WTC11 (cell line): ENCODE measurements at regions of chr11 and their contacts with region 1.

Region 1: GRCh38 chr11:126416542-126417090 is 61.1 kb downstream of the ST3GAL4 start:
- DNase-seq: peak; percentile 83
- ATAC-seq: peak; percentile 97
- H3K4me3 Mint-ChIP-seq: peak overlapping the region; percentile 50
- H3K27ac Mint-ChIP-seq: no peak overlapping the region
- H3K4me1 Mint-ChIP-seq: peaks cover 14% of the 10 kb centered on the region
- H3K27me3 Mint-ChIP-seq: peaks cover 8% of the 10 kb centered on the region
- CTCF ChIP-seq: no peak

Region 2: GRCh38 chr11:126403658-126404057 is 13.0 kb before region 1 on chr11:
- CTCF ChIA-PET with region 1: interaction called, 15 read pairs
- POLR2A ChIA-PET with region 1: no interaction called
- DNase-seq: no peak
- ATAC-seq: peak; percentile 8; the same call in 1 of the 2 replicates
- H3K4me3 Mint-ChIP-seq: no peak overlapping the region
- H3K27ac Mint-ChIP-seq: no peak overlapping the region
- H3K4me1 Mint-ChIP-seq: peaks cover 32% of the 10 kb centered on the region
- H3K27me3 Mint-ChIP-seq: no peaks in the 10 kb centered on the region
- CTCF ChIP-seq: no peak